Panc1 (cell line): ENCODE measurements at regions of chr5 and their contacts with region 1.

Region 1: GRCh38 chr5:1641560-1642166 is 117.9 kb upstream of the LPCAT1 start:
- DNase-seq: peak; percentile 84
- ATAC-seq: peak; percentile 83
- H3K4me3 ChIP-seq: no peak overlapping the region
- H3K27ac ChIP-seq: no peak overlapping the region
- H3K4me1 ChIP-seq: peaks cover 6% of the 10 kb centered on the region
- H3K27me3 ChIP-seq: peaks cover 8% of the 10 kb centered on the region
- CTCF ChIP-seq: peak; percentile 99

Region 2: GRCh38 chr5:1068204-1068894 is 573.3 kb before region 1 on chr5:
- CTCF ChIA-PET with region 1: no interaction called
- POLR2A ChIA-PET with region 1: no interaction called
- in situ Hi-C with region 1: no loop called
- intact Hi-C with region 1: no loop called
- DNase-seq: no peak
- ATAC-seq: peak; percentile 15; the same call in 1 of the 2 replicates
- H3K4me3 ChIP-seq: no peak overlapping the region
- H3K27ac ChIP-seq: no peak overlapping the region
- H3K4me1 ChIP-seq: no peaks in the 10 kb centered on the region
- H3K27me3 ChIP-seq: no peaks in the 10 kb centered on the region
- CTCF ChIP-seq: no peak

Region 3: DNA sequence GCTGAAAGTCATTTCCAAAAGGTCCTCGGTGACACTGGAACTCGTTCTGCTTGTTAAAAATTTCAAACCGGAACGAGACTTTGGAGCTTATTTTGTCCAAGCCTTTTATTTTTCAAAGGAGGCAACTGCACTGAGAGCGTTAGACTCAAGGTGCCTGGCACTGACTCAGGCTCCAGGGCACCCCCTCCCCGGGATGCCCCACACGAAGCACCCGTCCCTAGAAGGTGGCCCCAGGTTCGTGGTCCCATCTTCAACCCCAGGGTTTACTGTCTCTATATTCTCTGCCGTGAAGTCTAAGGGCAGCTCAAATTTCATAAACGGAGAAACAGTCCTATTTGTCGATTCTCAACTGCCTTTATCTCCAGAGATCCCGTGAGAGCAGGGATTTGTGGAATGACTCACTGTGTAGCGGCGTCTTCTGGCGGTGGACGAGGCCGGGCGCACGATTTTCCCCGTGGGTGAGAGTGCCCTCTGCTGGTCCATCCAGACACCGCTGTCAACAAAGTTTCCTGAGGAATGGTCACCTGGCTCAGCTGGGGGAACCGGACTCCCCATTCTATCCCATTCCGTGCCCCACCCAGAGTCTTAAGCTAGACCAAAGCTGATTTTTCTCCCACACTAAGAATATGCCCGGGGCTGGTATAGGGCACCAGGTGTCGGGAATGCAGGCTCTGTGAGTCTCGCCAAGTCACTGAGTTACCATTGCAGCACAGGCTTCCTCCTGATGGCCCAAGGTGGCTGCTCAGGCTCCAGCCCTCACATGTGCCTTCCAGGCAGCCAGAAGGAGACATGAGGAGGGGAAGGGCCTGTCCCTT is 467.3 kb before region 1 on chr5:
- CTCF ChIA-PET with region 1: interaction called, 3 read pairs
- POLR2A ChIA-PET with region 1: no interaction called
- in situ Hi-C with region 1: no loop called
- intact Hi-C with region 1: loop called (anchors 10 kb)
- DNase-seq: peak; percentile 76
- ATAC-seq: peak; percentile 80
- H3K4me3 ChIP-seq: peak overlapping the region in 1 of 2 experiments; percentile 48; a peak in 2 of 4 replicates
- H3K27ac ChIP-seq: peak overlapping the region; percentile 39; the same call in 1 of the 2 replicates
- H3K4me1 ChIP-seq: peaks cover 4% of the 10 kb centered on the region
- H3K27me3 ChIP-seq: no peaks in the 10 kb centered on the region
- CTCF ChIP-seq: peak; percentile 97

Region 4: GRCh38 chr5:1479581-1480188 is 162.0 kb before region 1 on chr5:
- CTCF ChIA-PET with region 1: interaction called, 18 read pairs
- POLR2A ChIA-PET with region 1: no interaction called
- in situ Hi-C with region 1: no loop called
- intact Hi-C with region 1: loop called (anchors 2 kb)
- DNase-seq: no peak
- ATAC-seq: peak; percentile 28
- H3K4me3 ChIP-seq: no peak overlapping the region
- H3K27ac ChIP-seq: no peak overlapping the region
- H3K4me1 ChIP-seq: no peaks in the 10 kb centered on the region
- H3K27me3 ChIP-seq: no peaks in the 10 kb centered on the region
- CTCF ChIP-seq: peak; percentile 89

Region 5: GRCh38 chr5:1536322-1536845 is 105.3 kb before region 1 on chr5:
- CTCF ChIA-PET with region 1: no interaction called
- POLR2A ChIA-PET with region 1: no interaction called
- in situ Hi-C with region 1: no loop called
- intact Hi-C with region 1: no loop called
- DNase-seq: no peak
- ATAC-seq: peak; percentile 87
- H3K4me3 ChIP-seq: peak overlapping the region; percentile 1 to 40; a peak in 3 of 4 replicates
- H3K27ac ChIP-seq: peak overlapping the region; percentile 55; the same call in 1 of the 2 replicates
- H3K4me1 ChIP-seq: no peaks in the 10 kb centered on the region
- H3K27me3 ChIP-seq: no peaks in the 10 kb centered on the region; the same call in 1 of the 2 replicates
- CTCF ChIP-seq: no peak

Region 6: GRCh38 chr5:1594357-1595106 is 47.1 kb before region 1 on chr5:
- CTCF ChIA-PET with region 1: interaction called, 5 read pairs
- POLR2A ChIA-PET with region 1: no interaction called
- in situ Hi-C with region 1: no loop called
- intact Hi-C with region 1: loop called (anchors 10 kb)
- DNase-seq: peak; percentile 64
- ATAC-seq: peak; percentile 97
- H3K4me3 ChIP-seq: peak overlapping the region; percentile 83 to 85
- H3K27ac ChIP-seq: peak overlapping the region; percentile 95
- H3K4me1 ChIP-seq: no peaks in the 10 kb centered on the region; the same call in 1 of the 2 replicates
- H3K27me3 ChIP-seq: no peaks in the 10 kb centered on the region
- CTCF ChIP-seq: peak; percentile 87